Activated CD4-positive, alpha-beta memory T cell treated with anti-CD3 and anti-CD28 coated beads, Interleukin-2, amount 10 ng/mL, durations not matched to agents 7 days and 5 days (primary cell): ENCODE measurements at regions of chr12 and their contacts with region 1.

Region 1: DNA sequence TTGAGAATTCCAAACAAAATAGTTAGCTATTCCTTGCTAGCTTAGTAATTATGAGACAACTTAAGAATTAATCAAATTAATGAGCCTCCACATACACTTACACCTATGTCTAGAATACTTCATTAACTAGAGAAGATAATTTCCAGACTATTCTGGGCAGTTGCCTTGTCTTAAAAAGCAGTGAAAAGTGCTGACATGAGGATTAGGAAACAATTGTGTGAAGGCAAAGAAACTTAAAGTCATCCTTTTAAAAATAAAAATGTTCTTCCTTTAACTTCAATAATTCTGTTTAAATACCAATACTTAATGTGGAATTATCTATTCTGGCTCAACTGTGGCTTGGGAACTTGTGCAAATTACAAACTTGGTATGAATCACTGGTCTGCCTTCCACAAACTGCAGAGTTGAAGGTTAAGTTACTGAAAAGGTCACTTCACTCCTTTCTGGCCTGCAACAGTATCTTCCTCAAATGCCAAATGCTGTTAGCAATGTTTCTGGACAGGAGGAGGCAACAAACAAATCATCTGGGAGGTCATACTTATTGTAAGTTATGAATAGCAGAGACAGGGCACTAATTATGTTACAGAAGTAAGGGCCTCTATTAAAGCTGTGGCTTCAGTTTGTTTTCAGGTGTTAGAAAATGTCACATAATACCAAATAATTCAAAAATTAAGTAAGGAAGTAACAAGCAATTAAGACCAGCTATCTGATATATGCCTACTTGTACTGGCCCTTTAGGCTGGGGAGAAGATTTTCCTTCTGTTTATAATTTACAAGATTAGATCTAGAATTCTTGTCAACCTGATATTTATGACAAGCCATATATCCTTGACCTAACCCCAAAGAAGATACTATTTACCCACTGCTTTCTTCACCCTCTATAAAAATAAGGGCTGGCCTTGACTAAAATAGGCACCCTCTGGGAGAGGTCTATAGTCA is 19.1 kb downstream of the PPTC7 start:
- DNase-seq: no peak
- H3K4me3 Mint-ChIP-seq: no peak overlapping the region
- H3K27ac Mint-ChIP-seq: peak overlapping the region; percentile 53
- H3K4me1 Mint-ChIP-seq: peaks cover 46% of the 10 kb centered on the region
- H3K27me3 Mint-ChIP-seq: no peaks in the 10 kb centered on the region

Region 2: GRCh38 chr12:109861689-109862314 is 702.2 kb before region 1 on chr12:
- CTCF ChIA-PET with region 1: no interaction called
- POLR2A ChIA-PET with region 1: no interaction called
- DNase-seq: no peak
- H3K4me3 Mint-ChIP-seq: no peak overlapping the region
- H3K27ac Mint-ChIP-seq: no peak overlapping the region
- H3K4me1 Mint-ChIP-seq: peaks cover 29% of the 10 kb centered on the region
- H3K27me3 Mint-ChIP-seq: no peaks in the 10 kb centered on the region

Region 3: DNA sequence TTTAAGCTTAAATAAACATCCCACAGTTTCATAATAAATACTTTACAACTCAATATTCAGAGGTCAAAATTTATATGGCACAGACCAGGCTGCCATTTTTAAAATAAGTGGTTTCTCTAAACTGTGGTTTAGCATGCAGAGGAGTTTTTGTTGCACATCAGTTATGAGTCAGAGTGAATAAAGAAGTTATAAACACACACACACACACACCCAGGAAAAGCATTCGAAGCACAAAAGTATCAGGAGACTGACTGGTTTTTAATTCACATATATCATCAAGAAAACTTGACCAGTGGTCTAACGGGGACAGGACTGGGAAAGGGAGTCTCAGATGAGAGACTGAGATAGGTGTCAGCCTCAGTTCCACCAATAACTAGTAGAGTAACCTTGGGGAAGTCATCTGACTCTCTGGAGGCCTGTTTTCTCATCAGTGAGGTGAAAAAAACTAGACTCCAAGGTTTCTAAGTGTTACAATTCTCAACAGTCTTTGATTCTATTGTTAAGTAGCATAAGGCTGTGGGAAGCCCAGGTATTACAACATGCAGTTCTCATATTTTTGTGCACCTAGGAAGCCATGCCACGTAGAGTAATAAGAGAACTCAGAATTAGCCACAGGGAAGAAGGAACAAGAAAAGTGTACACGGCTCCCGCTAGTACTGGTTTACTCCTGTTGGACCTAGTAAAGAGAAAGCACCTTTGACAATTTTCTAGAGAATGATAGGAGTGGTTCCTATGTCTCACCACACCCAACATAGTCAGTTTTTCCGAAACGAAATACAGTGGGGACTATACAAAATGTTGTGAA is 13.9 kb after region 1 on chr12:
- CTCF ChIA-PET with region 1: interaction called, 8 read pairs
- POLR2A ChIA-PET with region 1: interaction called, 43 read pairs
- DNase-seq: peak; percentile 54
- H3K4me3 Mint-ChIP-seq: peak overlapping the region; percentile 67
- H3K27ac Mint-ChIP-seq: peak overlapping the region; percentile 98
- H3K4me1 Mint-ChIP-seq: peaks cover 66% of the 10 kb centered on the region
- H3K27me3 Mint-ChIP-seq: no peaks in the 10 kb centered on the region

Region 4: DNA sequence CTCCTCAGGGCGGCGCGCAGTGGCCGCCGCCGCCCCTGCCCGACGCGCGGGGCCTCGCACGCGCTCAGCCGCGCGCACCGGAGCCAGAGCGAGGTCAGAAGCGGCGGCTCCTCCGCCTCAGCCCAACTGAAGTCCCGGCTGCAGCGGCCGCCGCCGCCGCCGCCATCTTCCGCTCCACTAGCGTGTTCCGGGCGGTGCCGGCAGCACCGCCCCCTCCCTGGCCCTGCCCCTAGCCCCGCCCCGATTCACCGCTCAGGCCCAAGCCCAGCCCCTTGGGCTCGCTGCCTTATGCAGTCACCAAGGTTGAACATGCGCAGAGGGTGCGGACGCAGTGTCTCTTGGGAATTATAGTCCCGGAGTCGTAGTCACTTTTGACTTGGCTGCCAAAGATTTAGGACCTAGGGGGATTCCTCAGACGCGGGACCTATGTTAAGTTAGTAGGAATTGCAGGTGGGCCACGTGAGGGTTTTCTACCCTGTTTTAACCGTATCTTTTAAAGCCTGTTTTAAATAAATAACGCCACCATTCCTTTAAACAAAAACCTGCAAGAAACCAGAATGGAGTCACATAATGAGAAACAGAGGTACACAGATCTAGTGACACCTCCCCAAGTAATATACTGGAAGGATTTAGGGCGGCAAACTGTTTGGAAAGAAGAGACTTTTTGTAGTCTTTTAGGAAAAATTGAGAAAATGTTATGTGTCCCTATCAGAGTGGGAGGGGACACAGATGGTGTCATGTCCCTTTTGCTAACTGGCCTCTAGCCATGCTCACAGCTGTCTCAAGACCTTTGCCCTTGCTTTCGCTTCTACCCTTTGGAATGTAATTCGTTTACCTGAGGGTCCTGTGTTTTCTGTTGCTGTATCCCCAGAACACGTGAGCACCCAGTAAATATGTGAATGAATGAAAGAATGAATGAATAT is 19.4 kb after region 1 on chr12 and contains the start of gene PPTC7:
- CTCF ChIA-PET with region 1: interaction called, 3 read pairs
- POLR2A ChIA-PET with region 1: interaction called, 43 read pairs
- DNase-seq: peak; percentile 97
- H3K4me3 Mint-ChIP-seq: peak within 1 kb of the TSS; percentile 88
- H3K27ac Mint-ChIP-seq: peak within 1 kb of the TSS; percentile 88
- H3K4me1 Mint-ChIP-seq: peaks cover 64% of the 10 kb centered on the region
- H3K27me3 Mint-ChIP-seq: no peaks in the 10 kb centered on the region
- total RNA-seq, gene PPTC7: 31.5 to 31.8 TPM